Ovary (tissue), 10 donors: ENCODE measurements at regions of chr9 and their contacts with region 1.

Region 1: GRCh38 chr9:28967226-28967625 is 1393.9 kb upstream of the C9orf72 start:
- DNase-seq: no peak
- H3K4me3 ChIP-seq: no peak overlapping the region
- H3K27ac ChIP-seq: no peak overlapping the region
- H3K4me1 ChIP-seq: no peaks in the 10 kb centered on the region
- H3K27me3 ChIP-seq: no peaks in the 10 kb centered on the region
- CTCF ChIP-seq: no peak
- EP300 ChIP-seq: no peak
- POLR2A ChIP-seq: no peak

Region 2: GRCh38 chr9:28938981-28939380 is 28.2 kb before region 1 on chr9:
- intact Hi-C with region 1: loop called in 1 of 4 experiments (anchors 1 kb)
- DNase-seq: no peak
- H3K4me3 ChIP-seq: no peak overlapping the region
- H3K27ac ChIP-seq: no peak overlapping the region
- H3K4me1 ChIP-seq: no peaks in the 10 kb centered on the region
- H3K27me3 ChIP-seq: no peaks in the 10 kb centered on the region
- CTCF ChIP-seq: no peak
- EP300 ChIP-seq: no peak
- POLR2A ChIP-seq: no peak